GM12878 (cell line): ENCODE measurements at regions of chr12 and their contacts with region 1.

Region 1: GRCh38 chr12:25020621-25021243 is 71.8 kb upstream of the BCAT1 start:
- DNase-seq: peak; percentile 79
- ATAC-seq: peak; percentile 94
- H3K4me3 ChIP-seq: peak overlapping the region; percentile 49; the same call in 1 of the 2 replicates
- H3K27ac ChIP-seq: peak overlapping the region; percentile 76
- H3K4me1 ChIP-seq: peaks cover 35% of the 10 kb centered on the region
- H3K27me3 ChIP-seq: no peaks in the 10 kb centered on the region
- CTCF ChIP-seq: no peak
- EP300 ChIP-seq: peak; percentile 93 to 98
- POLR2A ChIP-seq: no peak
- RAD21 ChIP-seq: no peak; the same call in 1 of the 2 replicates

Region 2: DNA sequence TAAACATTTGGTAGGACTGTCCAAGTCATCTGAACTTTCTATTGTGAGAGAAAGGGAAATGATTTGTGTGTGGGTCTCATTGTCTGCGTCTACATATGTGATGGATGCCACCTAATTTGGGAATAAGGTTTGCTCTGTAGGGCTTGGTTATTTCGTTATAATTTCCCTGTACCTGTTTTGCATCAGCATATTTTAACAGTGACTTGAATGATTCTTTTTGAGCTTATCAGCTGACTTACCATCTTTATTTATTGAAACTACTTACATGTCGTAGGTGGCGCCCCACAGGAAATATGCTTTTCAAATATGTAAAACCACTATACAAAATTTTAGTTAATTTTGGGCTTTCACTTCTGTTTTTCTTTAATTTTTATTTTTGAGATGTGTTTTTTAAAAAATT is 15.4 kb before region 1 on chr12:
- CTCF ChIA-PET with region 1: interaction called, 40 read pairs
- POLR2A ChIA-PET with region 1: interaction called, 50 read pairs
- RAD21 ChIA-PET with region 1: interaction called, 137 read pairs
- SMC1A ChIA-PET with region 1: interaction called, 172 read pairs
- in situ Hi-C with region 1: no loop called
- intact Hi-C with region 1: loop called (anchors 2 kb)
- DNase-seq: peak; percentile 82
- ATAC-seq: peak; percentile 65
- H3K4me3 ChIP-seq: peak overlapping the region; percentile 4; the same call in 1 of the 2 replicates
- H3K27ac ChIP-seq: peak overlapping the region; percentile 58
- H3K4me1 ChIP-seq: peaks cover 40% of the 10 kb centered on the region
- H3K27me3 ChIP-seq: no peaks in the 10 kb centered on the region
- CTCF ChIP-seq: no peak
- EP300 ChIP-seq: peak; percentile 76 to 83; a peak in 3 of 4 replicates
- POLR2A ChIP-seq: no peak
- RAD21 ChIP-seq: no peak

Region 3: DNA sequence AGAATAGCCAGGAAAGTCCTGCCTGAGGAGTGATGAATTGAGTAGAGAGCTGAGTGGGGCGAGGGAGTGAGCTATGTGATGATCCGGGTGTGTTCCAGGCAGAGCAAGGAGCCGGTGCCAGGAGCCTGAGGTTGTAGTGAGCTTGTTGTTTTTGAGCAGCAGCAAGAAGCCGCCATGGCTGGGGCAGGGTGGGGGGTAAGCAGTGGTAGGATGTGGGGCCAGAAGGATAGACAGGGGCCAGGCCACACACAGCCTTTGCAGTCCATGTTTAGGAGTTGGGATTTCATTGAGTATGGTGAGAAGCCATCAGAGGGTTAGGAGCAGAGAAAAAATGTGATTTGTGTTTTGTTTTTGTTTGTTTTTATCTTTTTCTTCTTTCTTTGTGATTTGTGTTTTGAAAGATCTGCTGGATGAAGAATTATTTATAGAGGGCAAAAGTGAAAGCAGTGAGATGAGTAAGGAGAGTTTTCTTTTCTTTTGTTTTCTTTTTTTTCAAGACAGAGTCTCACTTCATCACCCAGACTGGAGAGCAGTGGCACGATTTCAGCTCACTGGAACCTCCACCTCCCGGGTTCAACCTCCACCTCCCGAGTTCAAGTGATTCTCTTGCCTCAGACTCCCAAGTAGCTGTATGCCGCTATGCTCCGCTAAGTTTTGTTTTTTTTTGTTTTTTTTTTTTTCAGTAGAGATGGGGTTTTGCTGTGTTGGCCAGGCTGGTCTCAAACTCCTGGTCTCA is 20.4 kb after region 1 on chr12:
- CTCF ChIA-PET with region 1: interaction called, 7 read pairs
- POLR2A ChIA-PET with region 1: interaction called, 7 read pairs
- RAD21 ChIA-PET with region 1: no interaction called
- SMC1A ChIA-PET with region 1: interaction called, 22 read pairs
- in situ Hi-C with region 1: no loop called
- intact Hi-C with region 1: no loop called
- DNase-seq: no peak
- ATAC-seq: peak; percentile 90
- H3K4me3 ChIP-seq: 0 out of 2 replicates have a peak overlapping the region, but pooled peaks have one; percentile 26
- H3K27ac ChIP-seq: peak overlapping the region; percentile 44; the same call in 1 of the 2 replicates
- H3K4me1 ChIP-seq: peaks cover 12% of the 10 kb centered on the region
- H3K27me3 ChIP-seq: no peaks in the 10 kb centered on the region
- CTCF ChIP-seq: no peak
- EP300 ChIP-seq: no peak
- POLR2A ChIP-seq: no peak
- RAD21 ChIP-seq: no peak